PC-3 (cell line): ENCODE measurements at regions of chr10 and their contacts with region 1.

Region 1: DNA sequence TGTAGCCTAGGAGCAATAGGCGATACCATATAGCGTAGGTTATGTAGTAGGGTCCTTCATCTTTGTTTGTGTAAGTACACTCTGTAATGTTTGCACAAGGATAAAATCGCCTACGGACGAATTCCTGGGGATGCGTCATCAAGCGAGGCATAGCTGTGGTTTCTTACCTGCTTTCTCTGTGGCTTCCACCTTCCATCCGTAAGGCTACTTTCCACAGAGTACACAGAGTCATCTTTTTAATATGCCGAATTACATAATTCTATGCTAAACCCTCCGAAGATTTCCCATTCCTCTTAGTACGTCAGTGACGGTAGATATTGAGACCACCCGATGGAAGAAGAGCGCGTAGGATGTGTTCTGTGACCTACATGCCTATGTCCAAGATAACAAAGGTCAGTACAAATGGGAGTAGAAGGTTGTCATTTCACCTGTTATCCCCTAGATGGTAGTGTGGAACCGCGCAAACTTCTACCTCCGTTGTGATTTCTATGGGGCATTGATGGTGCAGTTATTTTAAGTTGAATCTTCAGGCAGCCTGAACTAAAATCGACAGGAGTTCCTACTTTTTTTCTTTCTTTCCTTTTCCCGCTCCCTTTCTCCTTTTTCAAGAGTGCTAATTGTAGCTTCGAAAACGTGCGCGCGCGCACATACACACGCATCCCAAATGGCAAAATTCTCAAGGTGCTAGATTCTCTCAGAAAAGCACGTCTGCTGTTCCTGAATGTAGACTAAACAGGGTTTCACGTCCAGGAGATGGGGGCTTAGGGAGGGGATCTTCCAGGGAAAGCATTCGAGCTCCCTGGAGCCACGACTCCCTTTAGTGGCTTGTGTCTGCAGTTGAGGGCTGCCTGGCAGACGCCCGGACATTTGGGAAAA is 111.7 kb upstream of the MBL2 start:
- DNase-seq: peak; percentile 100
- ATAC-seq: peak; percentile 91
- H3K4me3 ChIP-seq: peak overlapping the region; percentile 52
- H3K27ac ChIP-seq: peak overlapping the region; percentile 52
- H3K4me1 ChIP-seq: peaks cover 25% of the 10 kb centered on the region
- H3K27me3 ChIP-seq: no peaks in the 10 kb centered on the region
- CTCF ChIP-seq: peak; percentile 100

Region 2: GRCh38 chr10:51001587-51001986 is 1882.6 kb before region 1 on chr10:
- CTCF ChIA-PET with region 1: no interaction called
- POLR2A ChIA-PET with region 1: no interaction called
- intact Hi-C with region 1: loop called (anchors 5 kb)
- DNase-seq: peak; percentile 85
- ATAC-seq: peak; percentile 87
- H3K4me3 ChIP-seq: no peak overlapping the region
- H3K27ac ChIP-seq: no peak overlapping the region
- H3K4me1 ChIP-seq: no peaks in the 10 kb centered on the region
- H3K27me3 ChIP-seq: peaks cover 73% of the 10 kb centered on the region
- CTCF ChIP-seq: peak; percentile 99

Region 3: GRCh38 chr10:52818019-52818418 is 66.2 kb before region 1 on chr10:
- CTCF ChIA-PET with region 1: interaction called, 58 read pairs
- POLR2A ChIA-PET with region 1: interaction called, 3 read pairs
- intact Hi-C with region 1: loop called (anchors 1 kb)
- DNase-seq: peak; percentile 100
- ATAC-seq: peak; percentile 82
- H3K4me3 ChIP-seq: no peak overlapping the region
- H3K27ac ChIP-seq: no peak overlapping the region
- H3K4me1 ChIP-seq: peaks cover 21% of the 10 kb centered on the region
- H3K27me3 ChIP-seq: no peaks in the 10 kb centered on the region
- CTCF ChIP-seq: peak; percentile 100

Region 4: DNA sequence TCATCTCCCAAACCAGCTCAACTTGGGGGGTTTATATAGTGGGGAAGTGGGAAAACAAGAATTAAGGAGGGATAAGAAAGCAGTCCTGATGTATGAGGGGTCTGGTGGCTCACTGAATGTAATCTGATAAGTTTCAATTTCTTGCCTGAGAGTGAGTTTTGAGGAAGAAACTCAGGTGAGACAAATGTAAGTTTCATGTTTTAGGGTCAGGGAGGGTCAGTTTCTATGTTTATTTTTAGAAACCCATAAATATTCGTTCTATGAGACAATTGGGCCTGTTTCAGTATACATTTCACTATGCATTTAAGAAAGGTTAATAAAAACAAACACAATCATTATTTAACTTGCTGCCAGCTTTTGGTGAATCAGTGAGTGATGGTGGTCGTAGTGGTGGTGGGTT is 16.4 kb after region 1 on chr10:
- CTCF ChIA-PET with region 1: no interaction called
- POLR2A ChIA-PET with region 1: no interaction called
- intact Hi-C with region 1: no loop called
- DNase-seq: no peak
- ATAC-seq: no peak
- H3K4me3 ChIP-seq: no peak overlapping the region
- H3K27ac ChIP-seq: no peak overlapping the region
- H3K4me1 ChIP-seq: peaks cover 10% of the 10 kb centered on the region; the same call in 1 of the 2 replicates
- H3K27me3 ChIP-seq: no peaks in the 10 kb centered on the region
- CTCF ChIP-seq: no peak

Region 5: GRCh38 chr10:53025172-53025711 is 141.0 kb after region 1 on chr10:
- CTCF ChIA-PET with region 1: no interaction called
- POLR2A ChIA-PET with region 1: no interaction called
- intact Hi-C with region 1: loop called (anchors 1 kb)
- DNase-seq: peak; percentile 85
- ATAC-seq: peak; percentile 81
- H3K4me3 ChIP-seq: peak overlapping the region; percentile 60
- H3K27ac ChIP-seq: peak overlapping the region; percentile 9
- H3K4me1 ChIP-seq: peaks cover 40% of the 10 kb centered on the region
- H3K27me3 ChIP-seq: no peaks in the 10 kb centered on the region
- CTCF ChIP-seq: no peak

Region 6: GRCh38 chr10:53356616-53357349 is 472.5 kb after region 1 on chr10:
- CTCF ChIA-PET with region 1: no interaction called
- POLR2A ChIA-PET with region 1: no interaction called
- intact Hi-C with region 1: loop called (anchors 1 kb)
- DNase-seq: peak; percentile 97
- ATAC-seq: peak; percentile 90
- H3K4me3 ChIP-seq: no peak overlapping the region
- H3K27ac ChIP-seq: 0 out of 2 replicates have a peak overlapping the region, but pooled peaks have one; percentile 1
- H3K4me1 ChIP-seq: peaks cover 19% of the 10 kb centered on the region
- H3K27me3 ChIP-seq: no peaks in the 10 kb centered on the region
- CTCF ChIP-seq: no peak

Region 7: GRCh38 chr10:53463539-53463938 is 579.3 kb after region 1 on chr10:
- CTCF ChIA-PET with region 1: no interaction called
- POLR2A ChIA-PET with region 1: no interaction called
- intact Hi-C with region 1: no loop called
- DNase-seq: no peak
- ATAC-seq: no peak
- H3K4me3 ChIP-seq: no peak overlapping the region
- H3K27ac ChIP-seq: no peak overlapping the region
- H3K4me1 ChIP-seq: no peaks in the 10 kb centered on the region
- H3K27me3 ChIP-seq: no peaks in the 10 kb centered on the region
- CTCF ChIP-seq: no peak

Region 8: DNA sequence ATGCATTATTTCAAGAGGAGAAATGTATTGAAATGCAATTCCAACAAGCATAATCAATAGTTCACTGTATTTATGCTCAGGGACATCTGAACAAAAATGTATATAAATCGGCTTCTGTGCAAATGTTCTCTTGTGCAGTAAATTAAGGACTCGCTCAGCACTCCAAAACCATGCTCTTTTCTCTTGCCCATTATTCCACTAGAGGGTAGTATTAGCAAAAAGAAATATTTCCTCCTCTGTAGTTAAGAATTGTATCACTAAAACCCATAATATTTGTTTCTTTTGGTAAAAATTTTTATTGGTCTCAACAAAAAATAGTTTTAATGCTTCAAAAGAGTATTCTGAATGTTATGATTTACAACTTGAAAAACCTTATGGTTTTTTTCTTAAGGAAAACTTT is 1113.7 kb after region 1 on chr10:
- CTCF ChIA-PET with region 1: no interaction called
- POLR2A ChIA-PET with region 1: no interaction called
- intact Hi-C with region 1: loop called (anchors 1 kb)
- DNase-seq: peak; percentile 60
- ATAC-seq: peak; percentile 93
- H3K4me3 ChIP-seq: no peak overlapping the region
- H3K27ac ChIP-seq: no peak overlapping the region
- H3K4me1 ChIP-seq: no peaks in the 10 kb centered on the region
- H3K27me3 ChIP-seq: no peaks in the 10 kb centered on the region
- CTCF ChIP-seq: peak; percentile 87

Region 9: DNA sequence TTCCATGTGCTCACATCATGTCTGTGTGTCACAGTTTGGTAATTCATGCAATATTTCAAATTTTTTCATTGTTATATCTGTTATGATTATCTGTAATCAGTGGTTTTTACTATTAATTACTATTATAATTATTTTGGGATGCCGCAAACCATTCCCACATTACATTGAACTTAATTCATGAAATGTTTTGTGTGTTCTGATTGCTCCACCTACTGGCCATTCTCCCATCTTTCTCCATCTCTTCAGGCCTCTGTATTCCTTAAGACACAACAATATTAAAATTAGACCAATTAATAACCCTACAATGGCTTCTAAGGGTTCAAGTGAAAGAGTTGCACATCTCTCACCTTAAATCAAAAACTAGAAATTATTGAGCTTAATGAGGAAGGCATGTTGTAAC is 1518.3 kb after region 1 on chr10:
- CTCF ChIA-PET with region 1: no interaction called
- POLR2A ChIA-PET with region 1: no interaction called
- intact Hi-C with region 1: loop called (anchors 1 kb)
- DNase-seq: peak; percentile 76
- ATAC-seq: peak; percentile 76
- H3K4me3 ChIP-seq: no peak overlapping the region
- H3K27ac ChIP-seq: no peak overlapping the region
- H3K4me1 ChIP-seq: no peaks in the 10 kb centered on the region
- H3K27me3 ChIP-seq: no peaks in the 10 kb centered on the region
- CTCF ChIP-seq: peak; percentile 92